HepG2 (cell line): ENCODE measurements at regions of chr1 and their contacts with region 1.

Region 1: GRCh38 chr1:37514350-37515184 is at the start of gene MEAF6:
- DNase-seq: peak; percentile 74
- ATAC-seq: peak; percentile 96
- H3K4me3 ChIP-seq: peak within 1 kb of the TSS; percentile 84 to 92 (median 90)
- H3K27ac ChIP-seq: peak within 1 kb of the TSS; percentile 96
- H3K4me1 ChIP-seq: peaks cover 23% of the 10 kb centered on the region
- H3K27me3 ChIP-seq: no peaks in the 10 kb centered on the region
- CTCF ChIP-seq: peak; percentile 71
- EP300 ChIP-seq: no peak
- POLR2A ChIP-seq: peak; percentile 77 to 88
- RAD21 ChIP-seq: peak; percentile 74
- total RNA-seq, gene MEAF6: 45.6 and 67.6 TPM in 2 replicates

Region 2: GRCh38 chr1:37474046-37474759 is 40.4 kb before region 1 on chr1 and contains the start of gene ZC3H12A:
- CTCF ChIA-PET with region 1: no interaction called
- POLR2A ChIA-PET with region 1: interaction called, 35 read pairs
- in situ Hi-C with region 1: no loop called
- intact Hi-C with region 1: no loop called
- DNase-seq: peak; percentile 78
- ATAC-seq: peak; percentile 51
- H3K4me3 ChIP-seq: peak within 1 kb of the TSS; percentile 70 to 85 (median 80)
- H3K27ac ChIP-seq: peak within 1 kb of the TSS; percentile 64
- H3K4me1 ChIP-seq: peaks cover 82% of the 10 kb centered on the region
- H3K27me3 ChIP-seq: no peaks in the 10 kb centered on the region; a peak in 1 of 5 replicates
- CTCF ChIP-seq: no peak
- EP300 ChIP-seq: peak in 1 of 2 experiments; percentile 32; a peak in 2 of 4 replicates
- POLR2A ChIP-seq: peak in 1 of 2 experiments; percentile 82; a peak in 2 of 4 replicates
- RAD21 ChIP-seq: peak; percentile 23; the same call in 1 of the 2 replicates
- total RNA-seq, gene ZC3H12A: 4.2 and 6.8 TPM in 2 replicates

Region 3: DNA sequence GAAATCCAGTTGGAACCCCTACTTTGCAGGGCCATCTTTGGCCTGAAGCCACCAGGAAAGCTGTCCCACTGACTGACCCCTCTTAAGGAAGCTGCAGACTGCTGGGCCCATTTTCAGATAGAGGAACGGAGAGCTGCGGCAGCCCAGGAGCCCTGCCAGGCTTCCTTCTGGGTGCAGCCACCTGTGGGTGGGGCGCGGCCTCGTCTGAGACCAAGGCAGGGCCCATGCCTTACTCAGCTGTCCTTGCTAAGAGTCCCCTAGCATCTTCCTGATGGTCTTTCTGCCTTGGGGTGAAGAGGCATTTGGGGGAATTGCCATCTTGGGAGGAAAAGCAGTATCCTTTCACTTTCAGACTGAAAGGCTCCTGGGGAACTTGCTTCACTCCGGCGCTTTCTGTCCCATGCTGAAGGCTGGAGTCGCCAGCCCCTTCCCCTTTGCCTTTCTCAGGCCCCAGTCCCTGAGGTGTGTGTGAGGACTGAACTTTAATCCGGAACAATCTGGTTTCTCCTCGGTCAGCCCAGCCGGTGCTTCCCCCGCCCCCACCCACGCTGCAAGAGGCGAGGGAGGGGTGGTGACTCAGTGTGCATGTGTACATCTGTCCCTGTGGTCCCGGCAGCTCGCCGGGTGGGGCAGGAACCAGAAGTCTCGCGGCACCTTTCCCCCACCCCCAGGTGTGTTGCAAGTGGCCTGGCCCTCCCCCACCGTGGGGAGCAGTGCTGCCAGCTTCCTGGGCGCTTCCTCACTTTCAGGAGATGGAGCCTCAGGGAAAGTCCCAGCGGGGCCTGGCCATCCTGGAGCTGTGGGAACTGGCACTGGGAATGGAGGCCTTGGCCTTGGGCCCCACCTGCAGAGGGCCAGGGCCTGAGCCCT is 35.1 kb before region 1 on chr1:
- CTCF ChIA-PET with region 1: no interaction called
- POLR2A ChIA-PET with region 1: interaction called, 35 read pairs
- in situ Hi-C with region 1: no loop called
- intact Hi-C with region 1: no loop called
- DNase-seq: peak; percentile 89
- ATAC-seq: peak; percentile 60
- H3K4me3 ChIP-seq: peak overlapping the region; percentile 39 to 85 (median 43); a peak in 5 of 6 replicates
- H3K27ac ChIP-seq: peak overlapping the region; percentile 75
- H3K4me1 ChIP-seq: peaks cover 53% of the 10 kb centered on the region
- H3K27me3 ChIP-seq: no peaks in the 10 kb centered on the region; a peak in 1 of 5 replicates
- CTCF ChIP-seq: no peak
- EP300 ChIP-seq: peak in 1 of 2 experiments; percentile 76; a peak in 2 of 4 replicates
- POLR2A ChIP-seq: peak in 1 of 2 experiments; percentile 60; a peak in 2 of 4 replicates
- RAD21 ChIP-seq: no peak; the same call in 1 of the 2 replicates

Region 4: GRCh38 chr1:37501661-37502060 is 12.9 kb before region 1 on chr1:
- CTCF ChIA-PET with region 1: no interaction called
- POLR2A ChIA-PET with region 1: interaction called, 10 read pairs
- in situ Hi-C with region 1: no loop called
- intact Hi-C with region 1: no loop called
- DNase-seq: no peak
- ATAC-seq: no peak
- H3K4me3 ChIP-seq: no peak overlapping the region
- H3K27ac ChIP-seq: no peak overlapping the region
- H3K4me1 ChIP-seq: peaks cover 18% of the 10 kb centered on the region
- H3K27me3 ChIP-seq: no peaks in the 10 kb centered on the region
- CTCF ChIP-seq: no peak
- EP300 ChIP-seq: no peak
- POLR2A ChIP-seq: no peak
- RAD21 ChIP-seq: no peak

Region 5: DNA sequence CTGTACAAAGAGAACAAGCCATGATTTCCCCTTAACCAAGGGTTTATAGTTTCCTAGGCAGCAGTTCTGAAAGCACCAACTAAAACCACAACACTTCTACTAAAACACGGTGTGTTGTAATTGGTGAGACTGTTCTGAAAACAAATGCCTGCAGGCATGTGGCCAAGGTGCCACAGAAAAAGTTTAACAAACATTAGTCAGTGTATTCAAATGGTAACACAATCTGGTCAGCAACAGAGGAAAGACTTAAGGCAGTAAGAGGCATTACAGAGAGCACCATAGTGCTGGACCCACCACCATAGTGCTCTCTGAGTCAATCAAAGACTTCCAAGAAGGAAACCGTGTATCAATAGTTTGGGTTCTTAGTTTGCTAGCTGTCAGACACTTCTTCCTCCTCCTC is 22.8 kb after region 1 on chr1:
- CTCF ChIA-PET with region 1: no interaction called
- POLR2A ChIA-PET with region 1: interaction called, 52 read pairs
- in situ Hi-C with region 1: no loop called
- intact Hi-C with region 1: loop called (anchors 1 kb)
- DNase-seq: no peak
- ATAC-seq: no peak; the same call in 2 of the 3 replicates
- H3K4me3 ChIP-seq: no peak overlapping the region
- H3K27ac ChIP-seq: peak overlapping the region; percentile 43
- H3K4me1 ChIP-seq: peaks cover 55% of the 10 kb centered on the region
- H3K27me3 ChIP-seq: no peaks in the 10 kb centered on the region
- CTCF ChIP-seq: no peak
- EP300 ChIP-seq: no peak
- POLR2A ChIP-seq: no peak
- RAD21 ChIP-seq: no peak

Region 6: DNA sequence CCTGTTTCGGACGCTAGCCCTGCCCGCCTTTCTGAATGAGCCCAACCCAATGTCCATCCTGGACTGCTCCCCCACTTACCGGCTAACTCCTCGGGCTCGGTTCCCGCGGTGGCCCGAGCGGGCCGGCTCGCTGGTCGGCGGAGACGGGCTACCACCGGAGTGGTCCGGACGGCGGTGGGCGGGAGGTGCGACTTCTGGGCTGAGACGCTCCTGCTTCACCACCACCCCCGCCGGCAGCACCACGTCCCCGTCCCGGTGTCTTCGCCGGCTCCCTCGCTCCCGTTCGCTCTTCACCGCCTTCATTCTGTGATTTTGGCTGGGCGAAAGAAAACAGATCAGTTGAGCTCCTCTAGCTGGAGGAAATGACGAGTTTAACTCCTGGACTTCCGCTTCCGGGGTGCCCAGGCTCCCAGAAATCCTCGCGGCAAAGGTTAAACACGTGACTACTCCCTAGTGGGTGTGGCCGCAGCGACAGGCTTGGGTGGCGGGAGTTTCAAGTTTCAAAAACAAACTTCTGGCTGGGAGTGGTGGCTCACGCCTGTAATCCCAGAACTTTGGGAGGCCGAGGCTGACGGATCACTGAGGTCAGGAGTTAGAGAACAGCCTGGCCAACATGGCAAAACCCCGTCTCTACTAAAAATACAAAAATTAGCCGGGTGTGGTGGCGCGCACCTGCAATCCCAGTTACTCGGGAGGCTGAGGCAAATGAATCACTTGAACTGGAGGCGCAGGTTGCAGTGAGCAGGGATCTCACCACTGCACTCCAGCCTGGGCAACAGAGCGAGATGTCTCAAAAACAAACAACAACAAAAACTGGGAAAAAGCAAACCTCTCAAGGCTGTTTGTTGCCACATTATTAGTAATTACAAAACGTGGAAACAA is 39.6 kb after region 1 on chr1 and contains the start of gene SNIP1:
- CTCF ChIA-PET with region 1: no interaction called
- POLR2A ChIA-PET with region 1: interaction called, 18 read pairs
- in situ Hi-C with region 1: no loop called
- intact Hi-C with region 1: no loop called
- DNase-seq: peak; percentile 92
- ATAC-seq: peak; percentile 91
- H3K4me3 ChIP-seq: peak within 1 kb of the TSS; percentile 93 to 98 (median 93)
- H3K27ac ChIP-seq: peak within 1 kb of the TSS; percentile 70
- H3K4me1 ChIP-seq: peaks cover 37% of the 10 kb centered on the region
- H3K27me3 ChIP-seq: no peaks in the 10 kb centered on the region; a peak in 1 of 5 replicates
- CTCF ChIP-seq: no peak
- EP300 ChIP-seq: no peak
- POLR2A ChIP-seq: peak; percentile 63 to 82
- RAD21 ChIP-seq: no peak; the same call in 1 of the 2 replicates
- total RNA-seq, gene SNIP1: 10.9 and 11.2 TPM in 2 replicates